ENCODE measurements at regions of chr20 and their contacts with region 1.

Region 1: DNA sequence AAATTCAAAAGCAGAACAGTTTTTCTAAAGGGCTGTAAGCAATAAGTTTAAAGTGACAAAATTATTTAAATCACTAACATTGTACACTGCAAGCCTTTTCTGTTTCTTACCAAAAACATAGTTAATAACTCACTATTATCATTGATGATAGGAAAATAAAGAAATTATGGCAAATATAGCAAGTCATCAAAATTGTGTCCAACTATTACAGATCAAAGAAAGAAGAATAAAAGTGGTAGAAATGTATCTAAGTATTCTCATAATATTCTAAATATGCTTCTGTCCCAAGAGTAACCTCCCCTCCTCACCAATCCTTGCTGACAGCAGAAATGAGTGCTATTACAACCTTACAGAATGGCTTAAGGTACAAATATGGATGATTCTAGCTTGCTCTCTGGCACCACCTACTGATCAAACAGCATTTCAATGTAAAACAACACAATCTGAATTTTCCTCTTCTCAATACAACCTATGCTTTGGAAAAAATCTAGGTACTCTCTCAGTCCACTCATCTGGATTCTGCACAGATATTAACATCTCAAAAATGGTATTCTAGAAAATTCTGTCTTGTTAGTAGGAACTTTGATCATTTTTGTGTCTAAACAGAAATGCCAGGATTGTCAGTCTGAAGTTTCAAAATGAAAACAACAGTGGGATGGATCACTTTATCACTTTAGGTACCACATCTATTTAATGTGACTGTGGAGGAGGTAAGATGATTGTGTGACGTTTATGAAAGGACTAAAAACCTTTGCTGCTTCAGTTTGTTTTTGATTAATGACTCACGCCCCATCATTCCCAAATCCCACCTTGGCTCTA is 40.9 kb downstream of the ZFP64 start:
- DNase-seq: no peak
- ATAC-seq: peak in 1 of 2 donors; percentile 46
- H3K4me3 ChIP-seq: no peak overlapping the region
- H3K27ac ChIP-seq: no peak overlapping the region
- H3K4me1 ChIP-seq: no peaks in the 10 kb centered on the region
- H3K27me3 ChIP-seq: no peaks in the 10 kb centered on the region
- CTCF ChIP-seq: peak; percentile 12 to 70 (median 43)
- POLR2A ChIP-seq: no peak

Region 2: GRCh38 chr20:52129611-52130010 is 21.0 kb before region 1 on chr20:
- in situ Hi-C with region 1: no loop called
- intact Hi-C with region 1: loop called (anchors 2 kb)
- DNase-seq: no peak
- ATAC-seq: no peak
- H3K4me3 ChIP-seq: no peak overlapping the region
- H3K27ac ChIP-seq: no peak overlapping the region
- H3K4me1 ChIP-seq: no peaks in the 10 kb centered on the region
- H3K27me3 ChIP-seq: no peaks in the 10 kb centered on the region
- CTCF ChIP-seq: no peak
- POLR2A ChIP-seq: no peak

Region 3: GRCh38 chr20:52601295-52601971 is 450.8 kb after region 1 on chr20:
- in situ Hi-C with region 1: no loop called
- intact Hi-C with region 1: no loop called
- DNase-seq: peak in 1 of 2 donors; percentile 37
- ATAC-seq: peak in 1 of 2 donors; percentile 54
- H3K4me3 ChIP-seq: no peak overlapping the region
- H3K27ac ChIP-seq: no peak overlapping the region
- H3K4me1 ChIP-seq: no peaks in the 10 kb centered on the region
- H3K27me3 ChIP-seq: no peaks in the 10 kb centered on the region
- CTCF ChIP-seq: no peak
- POLR2A ChIP-seq: no peak